GM10248 (cell line): ENCODE measurements at regions of chr1 and their contacts with region 1.

Region 1: GRCh38 chr1:8702850-8703810 is 114.3 kb downstream of the RERE start:
- DNase-seq: peak; percentile 88
- CTCF ChIP-seq: peak; percentile 39

Region 2: GRCh38 chr1:8687039-8687438 is 16.1 kb before region 1 on chr1:
- CTCF ChIA-PET with region 1: interaction called, 10 read pairs
- POLR2A ChIA-PET with region 1: no interaction called
- DNase-seq: no peak
- CTCF ChIP-seq: no peak

Region 3: GRCh38 chr1:8746554-8746953 is 43.4 kb after region 1 on chr1:
- CTCF ChIA-PET with region 1: no interaction called
- POLR2A ChIA-PET with region 1: no interaction called
- DNase-seq: no peak
- CTCF ChIP-seq: no peak